PC-3 (cell line): ENCODE measurements at regions of chr22 and their contacts with region 1.

Region 1: GRCh38 chr22:42856865-42857704 is at the start of gene ARFGAP3:
- DNase-seq: peak; percentile 89
- ATAC-seq: peak; percentile 86
- H3K4me3 ChIP-seq: peak within 1 kb of the TSS; percentile 94
- H3K27ac ChIP-seq: peak within 1 kb of the TSS; percentile 48; the same call in 1 of the 2 replicates
- H3K4me1 ChIP-seq: peaks cover 11% of the 10 kb centered on the region; the same call in 1 of the 2 replicates
- H3K27me3 ChIP-seq: no peaks in the 10 kb centered on the region
- CTCF ChIP-seq: no peak
- total RNA-seq, gene ARFGAP3: 11.2 and 19.2 TPM in 2 replicates

Region 2: GRCh38 chr22:42649246-42650099 is 207.6 kb before region 1 on chr22 and contains the start of gene CYB5R3:
- CTCF ChIA-PET with region 1: no interaction called
- POLR2A ChIA-PET with region 1: no interaction called
- intact Hi-C with region 1: no loop called
- DNase-seq: peak; percentile 55
- ATAC-seq: peak; percentile 83
- H3K4me3 ChIP-seq: peak within 1 kb of the TSS; percentile 98
- H3K27ac ChIP-seq: peak within 1 kb of the TSS; percentile 41
- H3K4me1 ChIP-seq: peaks cover 9% of the 10 kb centered on the region
- H3K27me3 ChIP-seq: no peaks in the 10 kb centered on the region
- CTCF ChIP-seq: no peak
- total RNA-seq, gene CYB5R3: 64.2 and 73.3 TPM in 2 replicates

Region 3: GRCh38 chr22:42829302-42829701 is 27.8 kb before region 1 on chr22:
- CTCF ChIA-PET with region 1: no interaction called
- POLR2A ChIA-PET with region 1: no interaction called
- intact Hi-C with region 1: no loop called
- DNase-seq: no peak
- ATAC-seq: no peak
- H3K4me3 ChIP-seq: no peak overlapping the region
- H3K27ac ChIP-seq: no peak overlapping the region
- H3K4me1 ChIP-seq: no peaks in the 10 kb centered on the region
- H3K27me3 ChIP-seq: no peaks in the 10 kb centered on the region
- CTCF ChIP-seq: no peak

Region 4: DNA sequence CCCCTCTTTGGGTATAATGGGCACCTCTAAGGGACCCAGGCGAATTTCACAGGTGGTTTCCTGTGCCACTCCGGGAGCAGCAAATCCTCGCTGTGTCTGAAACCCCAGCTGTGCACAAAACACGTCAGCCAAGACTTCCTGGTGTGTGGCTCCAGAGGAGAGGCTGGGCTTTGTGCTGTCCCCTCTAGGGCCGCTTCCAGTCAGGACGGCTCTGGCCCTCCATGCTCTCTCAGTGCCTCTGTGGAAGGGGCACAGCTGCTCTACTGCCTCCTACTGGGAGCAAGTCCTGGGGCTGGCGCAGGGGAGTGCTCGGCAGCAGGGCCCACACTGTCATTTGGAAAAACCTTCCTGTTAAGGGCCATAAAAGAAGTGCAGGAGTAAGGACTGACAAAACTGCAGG is 23.7 kb after region 1 on chr22:
- CTCF ChIA-PET with region 1: no interaction called
- POLR2A ChIA-PET with region 1: no interaction called
- intact Hi-C with region 1: no loop called
- DNase-seq: no peak
- ATAC-seq: no peak
- H3K4me3 ChIP-seq: no peak overlapping the region
- H3K27ac ChIP-seq: no peak overlapping the region
- H3K4me1 ChIP-seq: no peaks in the 10 kb centered on the region
- H3K27me3 ChIP-seq: no peaks in the 10 kb centered on the region
- CTCF ChIP-seq: peak; percentile 39

Region 5: DNA sequence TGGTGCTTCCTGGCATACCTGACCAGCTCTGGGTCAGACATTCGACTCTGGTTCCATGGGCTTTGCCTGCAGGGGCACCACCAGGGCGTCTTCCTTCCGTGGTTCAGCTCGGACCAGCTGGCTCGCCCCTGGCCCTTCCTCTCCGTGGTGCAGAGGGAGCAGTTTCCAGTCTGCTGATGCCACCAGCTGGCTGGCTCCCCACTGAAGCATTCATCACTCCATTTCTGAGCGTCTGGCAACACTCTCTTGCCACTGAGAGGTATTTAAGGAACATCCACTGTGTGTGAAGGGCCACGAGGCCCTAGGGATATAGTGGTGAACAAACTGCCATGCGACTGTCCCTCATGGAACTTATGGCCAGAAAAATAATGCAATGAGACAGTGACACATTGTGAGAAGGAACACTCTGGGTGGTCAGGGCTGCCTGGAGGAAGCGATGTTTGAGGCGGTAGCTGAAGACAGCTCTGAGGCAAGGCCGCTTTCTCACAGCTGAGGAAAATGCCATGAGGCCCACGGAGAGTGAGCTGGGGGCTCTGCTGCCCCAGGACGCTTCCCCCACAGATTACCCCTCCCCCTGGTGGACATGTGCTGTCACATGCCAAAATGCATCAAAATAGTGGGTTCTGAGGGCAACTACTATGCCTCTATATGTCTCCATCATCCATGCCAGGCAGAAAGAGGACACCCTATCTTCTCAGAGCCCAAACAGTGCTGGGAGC is 44.9 kb after region 1 on chr22:
- CTCF ChIA-PET with region 1: no interaction called
- POLR2A ChIA-PET with region 1: no interaction called
- intact Hi-C with region 1: no loop called
- DNase-seq: no peak
- ATAC-seq: no peak
- H3K4me3 ChIP-seq: no peak overlapping the region
- H3K27ac ChIP-seq: no peak overlapping the region
- H3K4me1 ChIP-seq: no peaks in the 10 kb centered on the region
- H3K27me3 ChIP-seq: no peaks in the 10 kb centered on the region
- CTCF ChIP-seq: peak; percentile 44

Region 6: GRCh38 chr22:42933481-42934091 is 76.5 kb after region 1 on chr22:
- CTCF ChIA-PET with region 1: no interaction called
- POLR2A ChIA-PET with region 1: interaction called, 15 read pairs
- intact Hi-C with region 1: no loop called
- DNase-seq: peak; percentile 80
- ATAC-seq: peak; percentile 70
- H3K4me3 ChIP-seq: no peak overlapping the region
- H3K27ac ChIP-seq: peak overlapping the region; percentile 94
- H3K4me1 ChIP-seq: peaks cover 57% of the 10 kb centered on the region
- H3K27me3 ChIP-seq: no peaks in the 10 kb centered on the region
- CTCF ChIP-seq: no peak